GM13976 (cell line): ENCODE measurements at regions of chr17 and their contacts with region 1.

Region 1: DNA sequence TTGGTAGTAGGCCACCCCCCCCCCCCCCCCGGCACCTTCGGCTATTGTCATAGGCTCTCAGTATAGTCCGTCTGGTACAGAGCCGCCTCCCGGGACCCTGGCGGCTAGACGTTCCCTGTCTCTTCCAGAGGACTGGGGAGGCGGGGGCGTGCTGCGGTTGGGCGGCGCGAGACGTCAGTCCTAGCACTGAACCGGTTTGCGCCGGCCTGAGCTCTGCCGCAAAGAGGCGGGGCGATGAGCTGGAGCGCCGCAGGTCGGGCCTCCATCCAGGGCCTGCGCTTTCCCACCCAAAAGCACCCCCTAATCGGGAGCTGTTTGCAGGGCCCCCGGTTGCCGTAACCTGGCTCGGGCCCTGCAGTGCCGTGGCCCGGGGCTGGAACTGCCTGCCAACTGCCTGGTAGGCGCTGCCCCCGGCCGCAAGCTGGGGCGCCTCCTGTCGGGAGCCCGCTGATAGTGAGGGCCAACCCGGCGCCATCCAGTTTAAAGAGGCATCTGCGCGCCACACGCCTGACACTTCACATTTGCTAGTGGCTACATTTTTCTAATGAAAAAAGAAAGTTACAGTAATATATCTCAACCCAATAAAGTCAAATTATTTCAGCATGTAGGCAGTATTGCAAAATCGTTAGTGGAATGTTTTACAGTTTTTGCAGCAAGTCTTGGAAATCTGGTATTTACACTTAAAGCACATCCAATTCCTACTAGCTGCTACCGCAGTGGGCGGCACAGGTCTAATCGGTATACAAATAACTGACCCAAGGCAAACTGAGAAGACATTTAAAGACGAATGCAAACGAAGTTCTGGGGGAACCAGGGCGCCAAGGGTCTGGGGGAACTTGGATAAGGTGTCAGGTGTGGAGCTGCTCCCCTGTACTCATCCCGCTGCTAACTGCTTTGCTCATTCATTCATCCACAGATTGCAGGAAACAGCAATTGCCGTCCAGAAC is 748 bp upstream of the USP22 start:
- DNase-seq: peak; percentile 10
- CTCF ChIP-seq: peak; percentile 84

Region 2: GRCh38 chr17:20992987-20993862 is 50.3 kb before region 1 on chr17:
- in situ Hi-C with region 1: no loop called
- DNase-seq: peak; percentile 92
- CTCF ChIP-seq: peak; percentile 78

Region 3: DNA sequence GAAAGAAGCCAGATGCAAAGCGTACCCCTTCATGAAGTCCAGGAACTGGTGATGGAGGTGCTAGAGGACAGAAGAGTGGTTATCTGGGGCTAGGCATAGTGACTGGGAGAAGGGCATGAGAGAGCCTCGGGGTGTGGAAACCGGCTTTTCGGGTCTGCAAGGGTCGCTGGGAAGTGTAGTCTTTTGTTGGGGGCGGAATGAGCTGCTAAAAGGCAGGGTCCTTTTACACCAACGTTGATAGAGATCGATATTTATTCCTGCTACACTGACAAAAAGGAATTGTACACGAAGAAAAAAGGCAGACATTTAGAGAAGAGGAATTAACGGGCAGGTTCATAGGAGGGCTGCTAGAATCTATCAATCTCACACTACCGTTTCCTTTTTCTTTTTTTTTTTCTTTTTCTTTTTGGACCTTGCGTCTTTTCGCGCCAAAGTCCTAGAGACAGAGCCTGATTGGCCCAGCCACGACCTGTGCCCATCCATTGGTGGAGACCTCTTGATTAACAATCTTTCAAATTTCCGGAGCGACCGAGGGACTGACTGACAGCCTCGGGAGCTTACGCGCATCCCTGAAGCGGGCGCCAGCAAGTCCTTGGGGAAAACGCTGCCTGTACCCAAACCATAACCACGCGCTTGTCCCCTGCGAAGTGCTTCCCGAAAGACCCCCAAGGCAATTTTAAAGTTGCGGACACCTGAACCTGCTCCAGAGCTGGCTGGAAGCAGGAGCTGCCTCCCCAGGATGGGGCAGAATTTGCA is 55.6 kb after region 1 on chr17:
- in situ Hi-C with region 1: loop called (anchors 10 kb)
- DNase-seq: peak; percentile 91
- CTCF ChIP-seq: no peak

Region 4: DNA sequence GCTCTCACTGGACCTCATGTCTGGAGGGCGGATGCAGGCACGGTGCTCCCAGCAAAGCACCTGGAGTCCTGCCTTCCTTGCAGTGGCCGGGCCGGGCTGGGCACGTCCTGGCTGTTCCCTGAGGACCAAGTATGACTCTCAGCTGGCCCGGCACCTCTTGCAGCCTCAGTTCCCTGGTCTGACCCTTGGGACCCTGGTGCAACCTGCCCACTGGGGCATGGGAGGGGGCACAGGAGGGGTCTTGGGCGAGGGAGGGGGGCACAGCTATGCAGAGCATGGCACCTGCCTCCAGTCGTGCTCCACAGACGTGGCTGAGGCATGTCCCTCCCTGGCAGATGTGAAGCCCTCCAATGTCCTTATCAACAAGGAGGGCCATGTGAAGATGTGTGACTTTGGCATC is 260.5 kb after region 1 on chr17:
- in situ Hi-C with region 1: no loop called
- DNase-seq: peak; percentile 44
- CTCF ChIP-seq: no peak

Region 5: DNA sequence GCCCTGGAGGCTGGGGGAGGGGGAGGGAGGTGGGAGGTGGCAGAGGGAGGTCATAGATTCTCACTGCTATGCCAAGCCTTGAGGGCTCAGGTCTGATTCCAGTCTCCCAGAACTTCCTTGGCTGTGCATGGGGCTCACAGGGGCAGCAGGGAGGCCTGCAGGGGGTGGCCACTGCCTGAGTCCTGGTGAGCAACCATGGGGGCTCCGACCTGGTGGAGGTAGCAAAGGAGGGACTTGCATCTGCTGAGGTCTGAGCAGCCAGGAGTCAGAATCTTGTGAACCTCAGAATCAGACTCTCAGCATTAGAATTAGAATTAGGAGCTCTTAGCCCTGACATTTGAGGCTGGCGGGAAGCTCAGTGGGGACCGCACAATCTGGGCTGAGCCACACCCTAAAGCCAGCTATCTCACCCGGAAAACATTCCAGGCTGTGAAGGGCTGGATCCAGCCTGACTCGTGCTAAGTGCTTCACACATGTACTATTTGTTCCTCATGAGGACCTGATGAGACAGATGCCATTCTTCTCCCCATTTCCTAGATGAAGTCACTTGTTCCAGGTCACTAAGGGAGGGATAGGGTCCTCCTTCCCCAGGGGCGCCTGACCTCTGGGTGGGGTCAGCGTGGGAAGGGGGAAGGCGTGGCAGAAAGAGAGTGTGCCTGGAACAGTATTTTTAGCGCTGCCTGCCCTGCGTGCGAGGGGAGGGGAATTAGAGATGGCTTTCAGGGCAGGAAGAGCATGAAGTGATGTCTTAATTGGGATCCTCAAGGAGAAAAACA is 315.3 kb after region 1 on chr17:
- in situ Hi-C with region 1: no loop called
- DNase-seq: no peak
- CTCF ChIP-seq: no peak